Activated naive CD4-positive, alpha-beta T cell treated with anti-CD3 and anti-CD28 coated beads for 36 hours (primary cell): ENCODE measurements at regions of chr1 and their contacts with region 1.

Region 1: GRCh38 chr1:100377590-100378361 is 25.5 kb downstream of the CDC14A start:
- DNase-seq: no peak
- H3K4me3 Mint-ChIP-seq: no peak overlapping the region
- H3K27ac Mint-ChIP-seq: peak overlapping the region; percentile 71
- H3K4me1 Mint-ChIP-seq: peaks cover 60% of the 10 kb centered on the region
- H3K27me3 Mint-ChIP-seq: no peaks in the 10 kb centered on the region

Region 2: DNA sequence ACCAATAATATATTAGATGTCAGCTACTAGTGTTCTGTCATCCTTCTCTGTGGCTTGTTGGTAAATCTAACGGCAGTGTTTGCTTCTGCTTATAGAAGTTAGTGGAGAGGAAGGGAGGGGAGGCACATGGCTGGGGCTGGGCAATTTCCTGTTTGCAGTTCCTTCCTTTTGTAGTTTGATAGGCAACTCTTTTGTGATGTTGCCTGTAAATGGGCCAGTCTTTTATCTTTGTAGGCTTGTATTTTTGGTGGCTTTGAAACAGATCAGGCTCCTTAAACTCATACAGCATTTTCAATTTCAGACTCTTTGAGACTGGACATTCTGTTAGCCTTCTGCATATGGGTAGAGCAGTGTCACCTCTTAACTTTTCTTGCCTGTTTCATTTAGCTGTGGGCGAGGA is 22.6 kb after region 1 on chr1:
- CTCF ChIA-PET with region 1: interaction called, 4 read pairs
- intact Hi-C with region 1: loop called (anchors 1 kb)
- DNase-seq: peak; percentile 73
- H3K4me3 Mint-ChIP-seq: peak overlapping the region; percentile 60
- H3K27ac Mint-ChIP-seq: peak overlapping the region; percentile 94
- H3K4me1 Mint-ChIP-seq: peaks cover 75% of the 10 kb centered on the region
- H3K27me3 Mint-ChIP-seq: no peaks in the 10 kb centered on the region

Region 3: GRCh38 chr1:100414693-100415497 is 37.1 kb after region 1 on chr1:
- CTCF ChIA-PET with region 1: no interaction called
- intact Hi-C with region 1: loop called (anchors 1 kb)
- DNase-seq: no peak
- H3K4me3 Mint-ChIP-seq: peak overlapping the region; percentile 3
- H3K27ac Mint-ChIP-seq: peak overlapping the region; percentile 67
- H3K4me1 Mint-ChIP-seq: peaks cover 73% of the 10 kb centered on the region
- H3K27me3 Mint-ChIP-seq: no peaks in the 10 kb centered on the region

Region 4: GRCh38 chr1:100423832-100424337 is 46.1 kb after region 1 on chr1:
- CTCF ChIA-PET with region 1: no interaction called
- intact Hi-C with region 1: loop called (anchors 1 kb)
- DNase-seq: no peak
- H3K4me3 Mint-ChIP-seq: peak overlapping the region; percentile 36
- H3K27ac Mint-ChIP-seq: peak overlapping the region; percentile 59
- H3K4me1 Mint-ChIP-seq: peaks cover 63% of the 10 kb centered on the region
- H3K27me3 Mint-ChIP-seq: no peaks in the 10 kb centered on the region

Region 5: GRCh38 chr1:100433563-100433962 is 55.8 kb after region 1 on chr1:
- CTCF ChIA-PET with region 1: interaction called, 4 read pairs
- intact Hi-C with region 1: loop called (anchors 1 kb)
- DNase-seq: no peak
- H3K4me3 Mint-ChIP-seq: no peak overlapping the region
- H3K27ac Mint-ChIP-seq: no peak overlapping the region
- H3K4me1 Mint-ChIP-seq: peaks cover 61% of the 10 kb centered on the region
- H3K27me3 Mint-ChIP-seq: no peaks in the 10 kb centered on the region

Region 6: DNA sequence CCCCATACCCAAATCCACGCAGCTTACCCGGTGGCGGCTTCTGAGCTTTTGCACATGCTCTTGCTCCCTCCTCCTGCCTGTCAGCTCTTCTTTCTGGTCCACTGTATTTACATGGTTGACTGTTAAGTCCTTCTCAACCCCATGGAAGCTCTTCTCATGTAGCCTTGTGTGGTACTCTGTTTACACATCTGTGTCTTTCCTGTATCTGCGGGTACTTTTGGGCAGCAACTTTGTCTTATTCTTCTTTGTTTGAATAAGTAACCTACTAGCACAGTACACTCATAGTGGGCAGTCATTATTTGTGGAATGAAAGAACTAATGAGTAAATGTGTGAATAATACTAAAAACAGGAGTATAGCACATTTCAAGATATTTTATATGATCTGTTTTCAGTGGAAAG is 71.7 kb after region 1 on chr1:
- CTCF ChIA-PET with region 1: interaction called, 3 read pairs
- intact Hi-C with region 1: loop called (anchors 1 kb)
- DNase-seq: peak; percentile 61
- H3K4me3 Mint-ChIP-seq: peak overlapping the region; percentile 9
- H3K27ac Mint-ChIP-seq: peak overlapping the region; percentile 79
- H3K4me1 Mint-ChIP-seq: peaks cover 87% of the 10 kb centered on the region
- H3K27me3 Mint-ChIP-seq: no peaks in the 10 kb centered on the region